ENCODE measurements at regions of chr2 and their contacts with region 1.

Region 1: DNA sequence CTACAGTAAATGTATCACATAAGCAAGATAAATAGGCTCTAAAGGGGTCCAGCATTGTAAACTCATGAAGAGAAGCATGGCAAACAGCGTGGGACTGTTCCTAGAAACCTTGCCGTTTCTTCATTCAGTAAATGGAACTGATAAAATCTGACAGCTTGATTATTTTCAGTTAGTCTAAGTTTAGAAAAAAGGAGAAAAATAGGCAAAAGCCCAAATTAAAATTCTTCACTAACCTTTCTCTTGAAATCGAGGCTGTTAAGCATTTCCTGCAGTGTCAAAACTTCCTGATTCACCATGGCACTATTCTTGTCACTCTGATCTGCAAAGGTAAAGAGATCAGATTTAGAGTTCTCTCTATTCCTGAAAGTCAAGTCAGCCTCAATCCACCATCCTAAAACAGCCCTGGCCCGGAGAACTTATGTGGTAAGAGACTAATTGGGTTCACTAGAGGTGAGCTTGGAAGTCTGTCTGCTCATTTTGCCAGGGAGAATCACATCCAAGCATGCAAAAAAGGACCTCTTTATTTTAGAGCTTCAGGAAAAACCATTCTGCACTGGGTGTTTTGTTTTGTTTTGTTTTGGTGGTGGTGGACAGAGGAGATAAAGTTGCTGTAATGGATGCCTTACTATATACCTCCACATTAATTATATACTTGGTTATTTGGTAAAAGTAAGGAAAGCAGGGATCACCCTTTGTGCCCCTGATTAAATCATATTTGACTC is 52.4 kb upstream of the STAT1 start:
- DNase-seq: no peak
- H3K4me3 Mint-ChIP-seq: peak overlapping the region; percentile 76
- H3K27ac Mint-ChIP-seq: peak overlapping the region; percentile 80
- H3K4me1 Mint-ChIP-seq: peaks cover 74% of the 10 kb centered on the region
- H3K27me3 Mint-ChIP-seq: no peaks in the 10 kb centered on the region

Region 2: DNA sequence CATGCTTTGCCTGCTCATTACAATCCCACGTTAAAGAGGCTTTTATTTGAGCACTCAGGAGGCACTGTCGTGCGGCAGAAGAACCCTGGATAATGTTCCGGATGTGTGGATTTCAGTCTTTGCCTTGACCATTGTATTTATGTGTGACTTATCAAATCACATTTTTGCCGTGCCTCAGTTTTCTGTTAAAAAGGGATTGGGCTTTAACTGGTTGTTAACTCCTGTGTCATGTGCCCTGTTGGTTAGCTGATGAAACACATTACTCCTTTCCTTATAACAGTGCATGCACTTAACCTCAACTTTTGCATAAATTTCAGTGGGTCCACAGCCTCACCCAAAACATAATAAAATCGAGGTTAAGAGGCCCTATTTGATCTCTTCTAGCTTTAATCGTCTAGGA is 364.8 kb before region 1 on chr2:
- intact Hi-C with region 1: no loop called
- DNase-seq: no peak
- H3K4me3 Mint-ChIP-seq: no peak overlapping the region
- H3K27ac Mint-ChIP-seq: no peak overlapping the region
- H3K4me1 Mint-ChIP-seq: peaks cover 5% of the 10 kb centered on the region
- H3K27me3 Mint-ChIP-seq: no peaks in the 10 kb centered on the region

Region 3: GRCh38 chr2:190996338-190996946 is 69.9 kb before region 1 on chr2:
- intact Hi-C with region 1: no loop called
- DNase-seq: no peak
- H3K4me3 Mint-ChIP-seq: no peak overlapping the region
- H3K27ac Mint-ChIP-seq: peak overlapping the region; percentile 77
- H3K4me1 Mint-ChIP-seq: peaks cover 59% of the 10 kb centered on the region
- H3K27me3 Mint-ChIP-seq: no peaks in the 10 kb centered on the region

Region 4: GRCh38 chr2:191020221-191020741 is 46.1 kb before region 1 on chr2:
- intact Hi-C with region 1: loop called (anchors 5 kb)
- DNase-seq: peak; percentile 96
- H3K4me3 Mint-ChIP-seq: no peak overlapping the region
- H3K27ac Mint-ChIP-seq: no peak overlapping the region
- H3K4me1 Mint-ChIP-seq: peaks cover 35% of the 10 kb centered on the region
- H3K27me3 Mint-ChIP-seq: no peaks in the 10 kb centered on the region

Region 5: GRCh38 chr2:191051825-191052778 is 14.3 kb before region 1 on chr2:
- intact Hi-C with region 1: loop called (anchors 1 kb)
- DNase-seq: no peak
- H3K4me3 Mint-ChIP-seq: no peak overlapping the region
- H3K27ac Mint-ChIP-seq: no peak overlapping the region
- H3K4me1 Mint-ChIP-seq: peaks cover 21% of the 10 kb centered on the region
- H3K27me3 Mint-ChIP-seq: no peaks in the 10 kb centered on the region

Region 6: DNA sequence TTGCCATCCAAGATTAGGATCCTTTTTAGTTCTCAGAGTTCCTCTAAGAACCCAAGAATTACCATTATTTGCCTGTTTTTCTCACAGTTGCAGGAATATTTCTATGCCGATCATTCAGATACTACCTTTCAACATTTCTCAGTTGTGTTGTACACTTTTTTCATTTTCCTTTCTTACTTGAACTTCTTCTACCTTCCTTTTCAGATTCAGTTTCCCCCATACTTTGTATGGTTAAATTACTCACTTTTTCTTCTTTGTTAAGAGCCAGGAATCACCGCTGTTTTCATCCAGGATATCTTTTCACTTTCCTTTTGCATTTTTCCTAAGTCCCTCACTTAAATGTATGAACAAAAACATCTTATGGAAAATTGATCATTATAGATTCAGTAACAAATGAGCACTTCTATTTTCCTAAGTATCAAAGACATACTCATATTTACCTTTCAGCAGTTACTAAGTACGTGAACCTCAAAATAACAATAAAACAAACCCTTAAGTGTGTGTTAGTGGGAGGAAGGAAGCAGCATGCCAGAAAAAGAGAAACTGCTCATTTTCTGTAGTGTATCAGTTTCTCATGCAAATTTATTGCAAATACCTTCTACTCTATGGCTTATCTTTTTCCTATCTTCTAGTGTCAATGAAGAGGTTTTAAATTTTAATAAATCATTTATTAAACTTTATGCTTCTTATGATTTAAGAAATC is 12.0 kb after region 1 on chr2:
- intact Hi-C with region 1: loop called (anchors 1 kb)
- DNase-seq: no peak
- H3K4me3 Mint-ChIP-seq: peak overlapping the region; percentile 74
- H3K27ac Mint-ChIP-seq: peak overlapping the region; percentile 85
- H3K4me1 Mint-ChIP-seq: peaks cover 42% of the 10 kb centered on the region
- H3K27me3 Mint-ChIP-seq: no peaks in the 10 kb centered on the region

Region 7: GRCh38 chr2:191105082-191105481 is 38.7 kb after region 1 on chr2:
- intact Hi-C with region 1: no loop called
- DNase-seq: no peak
- H3K4me3 Mint-ChIP-seq: no peak overlapping the region
- H3K27ac Mint-ChIP-seq: no peak overlapping the region
- H3K4me1 Mint-ChIP-seq: peaks cover 63% of the 10 kb centered on the region
- H3K27me3 Mint-ChIP-seq: no peaks in the 10 kb centered on the region

Measured in activated T-helper 2 cell treated with anti-CD3 and anti-CD28 coated beads, Interferon-gamma antibody, Interleukin-2, Interleukin-4, amounts not matched to agents 10 μg/mL and 5 μg/mL and 100 μg/mL, durations not matched to agents 14 hours and 24 hours and 36 hours (primary cell).